ENCODE measurements at regions of chr1 and their contacts with region 1.

Region 1: GRCh38 chr1:21200767-21201166 is 24.1 kb upstream of the EIF4G3 start:
- DNase-seq: no peak
- H3K4me3 Mint-ChIP-seq: no peak overlapping the region
- H3K27ac Mint-ChIP-seq: no peak overlapping the region
- H3K4me1 Mint-ChIP-seq: no peaks in the 10 kb centered on the region
- H3K27me3 Mint-ChIP-seq: peaks cover 23% of the 10 kb centered on the region

Region 2: GRCh38 chr1:20696397-20697329 is 504.1 kb before region 1 on chr1:
- CTCF ChIA-PET with region 1: interaction called, 51 read pairs
- DNase-seq: peak; percentile 81
- H3K4me3 Mint-ChIP-seq: peak overlapping the region; percentile 81
- H3K27ac Mint-ChIP-seq: peak overlapping the region; percentile 42
- H3K4me1 Mint-ChIP-seq: peaks cover 7% of the 10 kb centered on the region
- H3K27me3 Mint-ChIP-seq: peaks cover 65% of the 10 kb centered on the region

Region 3: DNA sequence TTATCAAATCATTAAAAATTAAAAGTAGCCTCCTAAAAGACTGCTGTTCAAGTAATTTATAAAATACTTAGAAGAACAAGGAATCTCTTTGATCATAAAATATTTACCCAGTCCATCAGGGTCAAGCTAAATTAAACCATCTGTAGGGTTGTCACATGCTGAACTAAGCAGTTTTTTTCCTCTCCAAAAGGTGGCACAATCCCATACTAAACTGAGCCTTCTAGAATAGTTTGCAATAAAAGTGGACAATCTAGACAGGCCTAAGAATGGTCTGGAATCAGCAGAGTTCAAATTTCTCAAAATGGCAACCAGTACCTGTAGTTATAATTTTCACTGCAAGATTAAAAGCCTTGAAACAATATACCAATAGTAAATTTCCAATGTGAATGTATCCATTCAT is 218.9 kb before region 1 on chr1:
- CTCF ChIA-PET with region 1: interaction called, 40 read pairs
- DNase-seq: no peak
- H3K4me3 Mint-ChIP-seq: no peak overlapping the region
- H3K27ac Mint-ChIP-seq: no peak overlapping the region
- H3K4me1 Mint-ChIP-seq: no peaks in the 10 kb centered on the region
- H3K27me3 Mint-ChIP-seq: no peaks in the 10 kb centered on the region

Region 4: DNA sequence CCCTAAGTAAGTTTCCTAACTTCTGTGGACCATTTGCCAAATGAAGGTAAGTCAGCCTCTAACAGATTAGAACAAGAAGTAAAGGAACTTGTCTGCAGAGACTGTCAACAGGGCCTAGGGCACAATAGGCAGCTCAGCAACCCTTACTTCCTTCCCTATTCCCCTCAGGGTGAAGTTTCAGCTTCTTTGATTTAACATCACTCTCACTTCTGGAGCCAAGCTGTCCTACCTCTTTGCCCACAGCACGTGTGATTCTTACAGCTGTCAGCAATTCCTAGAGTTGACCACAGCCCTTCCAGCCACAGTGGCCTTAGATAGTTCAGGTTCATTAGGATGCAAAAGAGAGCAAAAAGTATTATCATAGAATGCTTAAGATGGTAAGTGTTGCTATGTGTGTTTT is 16.5 kb before region 1 on chr1:
- CTCF ChIA-PET with region 1: interaction called, 17 read pairs
- DNase-seq: no peak
- H3K4me3 Mint-ChIP-seq: no peak overlapping the region
- H3K27ac Mint-ChIP-seq: no peak overlapping the region
- H3K4me1 Mint-ChIP-seq: no peaks in the 10 kb centered on the region
- H3K27me3 Mint-ChIP-seq: peaks cover 43% of the 10 kb centered on the region